ENCODE measurements at regions of chr1 and their contacts with region 1.

Region 1: GRCh38 chr1:207499573-207499972 is 3.6 kb downstream of the CR1 start:
- DNase-seq: peak; percentile 52
- CTCF ChIP-seq: peak; percentile 67

Region 2: GRCh38 chr1:207084701-207085180 is 414.8 kb before region 1 on chr1:
- in situ Hi-C with region 1: loop called (anchors 25 kb)
- DNase-seq: peak; percentile 59
- CTCF ChIP-seq: peak; percentile 68

Region 3: DNA sequence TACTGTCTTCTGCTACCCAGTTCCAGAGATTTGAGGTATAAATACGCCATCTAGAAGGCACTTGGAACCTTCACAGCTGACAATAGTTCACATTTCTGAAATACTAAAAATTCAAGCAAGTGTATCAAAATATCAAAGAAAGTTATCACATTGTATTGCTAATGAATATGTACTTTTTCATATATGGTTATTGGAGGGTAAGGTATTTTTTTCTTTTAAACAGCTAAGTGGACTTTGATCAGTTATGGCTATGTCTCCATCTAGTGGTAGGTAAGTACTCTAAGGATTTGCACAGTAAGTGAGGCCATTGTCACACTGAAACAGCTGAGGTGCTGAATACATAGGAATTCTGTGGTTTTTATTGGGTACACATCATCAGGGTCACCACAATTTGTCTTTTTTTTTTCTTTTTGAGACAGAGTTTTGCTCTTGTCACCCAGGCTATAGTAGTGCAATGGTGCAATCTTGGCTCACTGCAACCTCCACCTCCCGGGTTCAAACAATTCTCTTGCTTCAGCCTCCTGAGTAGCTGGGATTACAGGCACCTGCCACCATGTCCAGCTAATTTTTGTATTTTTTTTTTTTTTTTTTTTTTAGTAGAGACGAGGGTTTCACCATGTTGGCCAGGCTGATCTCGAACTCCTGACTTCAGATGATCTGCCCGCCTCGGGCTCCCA is 94.6 kb before region 1 on chr1:
- in situ Hi-C with region 1: loop called (anchors 5 kb)
- DNase-seq: peak; percentile 62
- CTCF ChIP-seq: peak; percentile 58

Region 4: DNA sequence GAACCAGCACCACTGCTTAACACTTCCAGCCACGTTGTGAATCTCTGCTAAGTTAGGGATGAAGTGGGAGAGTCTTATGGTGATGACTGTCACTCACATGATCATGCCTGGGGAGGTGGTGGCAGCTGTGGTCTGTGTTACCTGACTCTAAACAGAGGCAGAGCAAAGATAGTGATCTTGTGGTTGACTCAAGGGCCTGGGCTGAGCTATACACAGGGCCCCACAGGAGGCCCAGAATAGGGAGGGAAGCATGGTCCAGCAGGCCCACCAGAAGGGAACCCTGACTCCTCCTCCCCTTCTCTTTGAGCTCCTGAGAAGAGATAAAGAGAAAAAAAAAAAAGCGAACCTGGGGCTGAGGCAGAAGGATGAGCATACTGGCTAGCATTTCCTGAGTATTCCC is 689.6 kb after region 1 on chr1:
- in situ Hi-C with region 1: no loop called
- DNase-seq: peak; percentile 50
- CTCF ChIP-seq: no peak